ENCODE measurements at regions of chr9 and their contacts with region 1.

Region 1: GRCh38 chr9:71768388-71769174 is at the start of gene CEMIP2:
- DNase-seq: peak; percentile 36
- H3K4me3 ChIP-seq: peak within 1 kb of the TSS; percentile 68
- H3K27me3 ChIP-seq: no peaks in the 10 kb centered on the region
- CTCF ChIP-seq: 0 out of 2 replicates have a peak, but pooled peaks have one; percentile 5
- polyA plus RNA-seq, gene CEMIP2: 117 and 120 TPM in 2 replicates

Region 2: DNA sequence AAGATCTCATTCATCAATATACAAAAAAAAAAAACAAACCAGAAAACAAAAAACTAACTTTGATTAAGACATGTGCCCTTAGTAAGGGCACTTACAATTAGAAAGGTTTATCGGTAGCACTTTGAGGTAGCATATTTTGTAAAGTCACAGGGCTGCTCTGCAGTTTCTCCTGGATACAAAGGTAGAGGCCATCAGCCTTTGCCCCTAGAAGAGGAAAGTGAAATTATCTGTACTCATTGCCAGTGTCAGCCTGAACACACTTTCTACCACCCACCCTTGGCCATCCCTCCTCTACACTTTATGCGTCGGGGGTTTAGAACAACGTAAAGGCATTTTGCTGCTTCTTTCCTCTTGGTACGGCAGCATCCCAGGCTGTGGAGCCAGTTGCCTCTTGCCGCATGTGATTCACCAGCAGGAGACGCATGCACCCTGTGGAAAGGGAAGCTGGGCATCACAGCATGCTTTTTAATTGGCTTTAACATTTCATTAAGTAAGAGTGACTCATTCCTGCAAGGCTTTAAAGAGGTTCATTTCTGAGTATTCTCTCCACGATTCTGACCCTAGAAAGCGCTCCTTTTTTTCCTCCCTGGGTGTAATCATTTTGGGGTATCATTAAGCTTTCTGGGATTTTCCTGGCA is 84.9 kb before region 1 on chr9:
- CTCF ChIA-PET with region 1: interaction called, 22 read pairs
- POLR2A ChIA-PET with region 1: interaction called, 3 read pairs
- DNase-seq: no peak
- H3K4me3 ChIP-seq: no peak overlapping the region
- H3K27me3 ChIP-seq: no peaks in the 10 kb centered on the region
- CTCF ChIP-seq: peak; percentile 72

Region 3: GRCh38 chr9:71984403-71984802 is 215.8 kb after region 1 on chr9:
- CTCF ChIA-PET with region 1: no interaction called
- POLR2A ChIA-PET with region 1: interaction called, 30 read pairs
- DNase-seq: peak; percentile 46
- H3K4me3 ChIP-seq: no peak overlapping the region
- H3K27me3 ChIP-seq: no peaks in the 10 kb centered on the region
- CTCF ChIP-seq: no peak

Measured in BJ (cell line).